ENCODE measurements at regions of chr15 and their contacts with region 1.

Region 1: GRCh38 chr15:98658831-98659699 is 10.7 kb downstream of the IGF1R start:
- DNase-seq: peak; percentile 77
- CTCF ChIP-seq: peak; percentile 93

Region 2: DNA sequence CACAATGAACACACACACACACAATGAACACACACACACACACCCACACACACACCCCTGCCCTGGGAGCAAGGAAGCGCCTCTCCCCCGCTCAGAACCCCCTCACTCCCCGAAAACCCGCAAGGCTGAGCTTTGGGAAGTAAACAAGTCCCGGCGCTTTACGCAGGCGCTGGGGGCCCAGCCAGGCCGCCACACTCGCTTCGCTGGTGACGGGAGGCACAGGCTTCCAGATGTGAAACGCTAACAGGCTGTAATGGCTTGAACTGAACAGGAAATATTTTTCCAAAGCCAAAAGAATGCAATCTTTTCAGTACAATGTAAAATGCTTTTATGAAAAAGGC is 133.4 kb before region 1 on chr15:
- in situ Hi-C with region 1: loop called (anchors 10 kb)
- DNase-seq: no peak
- CTCF ChIP-seq: no peak

Region 3: GRCh38 chr15:98996169-98996568 is 337.1 kb after region 1 on chr15:
- in situ Hi-C with region 1: no loop called
- DNase-seq: no peak
- CTCF ChIP-seq: no peak